Left cardiac atrium (tissue), 4 donors: ENCODE measurements at regions of chr1 and their contacts with region 1.

Region 1: DNA sequence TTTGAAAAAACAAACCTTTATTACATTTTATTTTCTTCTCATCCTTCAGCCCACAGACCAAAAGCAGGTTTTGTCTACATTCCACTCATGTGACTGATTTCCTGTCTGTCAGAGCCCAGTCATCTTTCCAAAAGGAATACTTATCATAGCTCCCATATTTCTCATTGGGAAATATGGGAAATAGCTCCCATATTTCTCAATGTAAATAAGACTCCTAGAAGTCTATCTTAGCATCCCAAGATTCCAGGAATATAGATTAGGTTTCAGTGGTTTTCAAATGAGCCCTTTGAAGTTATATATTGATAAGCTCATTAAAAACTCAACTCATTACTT is 19.1 kb upstream of the NRDC start:
- DNase-seq: no peak
- ATAC-seq: no peak

Region 2: DNA sequence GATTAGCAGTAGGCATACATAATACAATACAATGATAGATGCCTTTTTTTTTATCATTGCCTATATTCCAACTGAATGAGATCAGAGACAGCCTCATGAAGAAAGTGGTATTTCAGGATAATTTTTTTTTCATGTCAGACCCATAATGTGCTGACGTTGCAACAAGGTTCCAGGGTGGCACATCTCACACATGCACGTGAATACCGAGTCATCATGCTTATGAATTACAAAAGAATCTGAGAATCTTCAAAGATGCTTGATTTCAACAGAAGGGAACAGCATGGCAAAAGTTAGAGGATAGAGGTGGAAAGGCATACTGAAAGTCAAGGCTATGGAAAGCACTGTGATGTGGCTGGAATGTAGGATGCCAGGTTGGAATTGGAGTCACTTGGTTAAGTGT is 666.5 kb before region 1 on chr1:
- intact Hi-C with region 1: no loop called
- DNase-seq: no peak
- ATAC-seq: no peak

Region 3: GRCh38 chr1:52002038-52002917 is 104.6 kb after region 1 on chr1:
- intact Hi-C with region 1: loop called (anchors 1 to 10 kb)
- DNase-seq: no peak
- ATAC-seq: peak; percentile 78 to 89